ENCODE measurements at regions of chr17 and their contacts with region 1.

Region 1: GRCh38 chr17:18314731-18315561 is at the starts of genes SMCR8 and TOP3A:
- H3K4me3 Mint-ChIP-seq: peak within 1 kb of the TSS; percentile 89
- H3K27ac Mint-ChIP-seq: peak within 1 kb of the TSS; percentile 100
- H3K4me1 Mint-ChIP-seq: peaks cover 81% of the 10 kb centered on the region
- H3K27me3 Mint-ChIP-seq: no peaks in the 10 kb centered on the region

Region 2: GRCh38 chr17:18217412-18218015 is 97.4 kb before region 1 on chr17:
- intact Hi-C with region 1: no loop called
- H3K4me3 Mint-ChIP-seq: no peak overlapping the region
- H3K27ac Mint-ChIP-seq: peak overlapping the region; percentile 30
- H3K4me1 Mint-ChIP-seq: peaks cover 16% of the 10 kb centered on the region
- H3K27me3 Mint-ChIP-seq: peaks cover 2% of the 10 kb centered on the region

Region 3: DNA sequence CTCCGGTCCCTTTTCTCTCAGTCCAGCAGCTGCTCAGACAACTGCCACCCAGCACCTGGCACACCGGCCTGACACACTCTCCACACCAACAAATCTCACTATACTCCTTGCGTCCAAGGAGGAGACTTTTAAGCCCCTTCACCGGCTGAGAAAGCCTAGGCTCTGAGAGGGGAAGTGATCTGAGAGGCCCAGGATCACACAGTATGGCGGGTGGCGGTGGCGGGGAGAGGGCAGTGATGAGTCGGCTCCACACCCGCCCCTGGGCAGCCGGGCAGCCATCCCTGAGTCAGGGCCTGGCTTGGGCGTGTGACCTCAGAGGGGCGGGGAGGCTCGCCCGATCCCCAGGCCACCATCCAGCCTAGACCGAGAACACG is 57.0 kb before region 1 on chr17:
- intact Hi-C with region 1: loop called (anchors 1 kb)
- H3K4me3 Mint-ChIP-seq: peak overlapping the region; percentile 95
- H3K27ac Mint-ChIP-seq: peak overlapping the region; percentile 91
- H3K4me1 Mint-ChIP-seq: peaks cover 51% of the 10 kb centered on the region
- H3K27me3 Mint-ChIP-seq: no peaks in the 10 kb centered on the region

Region 4: GRCh38 chr17:18363101-18364049 is 48.4 kb after region 1 on chr17 and contains the start of gene SHMT1:
- intact Hi-C with region 1: loop called (anchors 1 kb)
- H3K4me3 Mint-ChIP-seq: peak within 1 kb of the TSS; percentile 91
- H3K27ac Mint-ChIP-seq: peak within 1 kb of the TSS; percentile 69
- H3K4me1 Mint-ChIP-seq: peaks cover 12% of the 10 kb centered on the region
- H3K27me3 Mint-ChIP-seq: peaks cover 4% of the 10 kb centered on the region

Measured in dendritic cell treated with granulocyte-macrophage colony-stimulating factor and Interleukin-4, amounts not matched to agents 40 ng/mL and 50 ng/mL, for 4 days (primary cell).